Caco-2 (cell line): ENCODE measurements at regions of chr9 and their contacts with region 1.

Region 1: GRCh38 chr9:104991144-104991953 is 63.4 kb upstream of the ABCA1 start:
- DNase-seq: peak; percentile 84 to 85
- H3K4me3 ChIP-seq: peak overlapping the region; percentile 68
- H3K4me3 Mint-ChIP-seq: peak overlapping the region; percentile 96
- H3K27ac Mint-ChIP-seq: peak overlapping the region; percentile 82
- H3K4me1 ChIP-seq: peaks cover 29% of the 10 kb centered on the region
- H3K4me1 Mint-ChIP-seq: peaks cover 17% of the 10 kb centered on the region
- H3K27me3 ChIP-seq: no peaks in the 10 kb centered on the region
- H3K27me3 Mint-ChIP-seq: no peaks in the 10 kb centered on the region
- CTCF ChIP-seq: no peak

Region 2: DNA sequence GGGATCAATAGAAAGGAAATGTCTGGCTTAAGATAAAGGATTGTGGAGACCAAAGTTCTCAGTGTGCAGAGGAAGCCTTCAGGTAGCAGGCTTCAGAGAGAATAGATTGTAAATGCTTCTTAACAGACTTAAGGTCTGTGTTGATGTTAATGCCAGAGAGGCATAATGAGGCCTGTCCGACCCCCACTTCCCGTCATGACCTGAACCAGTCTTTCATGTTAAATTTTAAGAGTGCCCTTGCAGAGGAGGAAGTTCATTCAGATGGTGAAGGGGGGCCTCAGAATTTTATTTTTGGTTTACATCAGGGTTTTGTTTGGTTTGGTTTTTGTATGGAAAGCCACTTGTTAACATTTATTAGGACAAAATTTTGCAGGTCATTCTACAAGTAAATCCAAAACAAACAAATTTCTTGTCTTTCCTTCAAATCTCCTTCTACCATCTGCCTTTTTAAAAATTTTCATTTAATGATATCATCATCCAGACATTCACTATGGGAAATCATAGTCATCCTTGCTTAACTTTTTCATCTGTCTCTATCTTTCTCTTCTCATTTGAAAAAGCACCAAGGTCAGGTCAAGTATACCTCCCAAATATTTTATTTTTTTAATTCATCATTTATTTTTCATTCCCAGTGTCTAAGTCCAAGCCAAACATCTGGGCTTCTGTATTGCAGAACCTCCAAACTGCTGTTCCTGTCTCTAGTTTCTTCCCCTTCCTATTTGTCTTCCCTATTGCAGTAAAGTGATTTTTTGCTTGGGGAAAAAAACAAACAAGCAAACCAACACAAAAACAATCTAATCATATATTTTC is 56.5 kb before region 1 on chr9:
- CTCF ChIA-PET with region 1: no interaction called
- POLR2A ChIA-PET with region 1: no interaction called
- intact Hi-C with region 1: no loop called
- DNase-seq: no peak
- H3K4me3 ChIP-seq: no peak overlapping the region
- H3K4me3 Mint-ChIP-seq: no peak overlapping the region
- H3K27ac Mint-ChIP-seq: no peak overlapping the region
- H3K4me1 ChIP-seq: peaks cover 11% of the 10 kb centered on the region
- H3K4me1 Mint-ChIP-seq: peaks cover 8% of the 10 kb centered on the region
- H3K27me3 ChIP-seq: no peaks in the 10 kb centered on the region
- H3K27me3 Mint-ChIP-seq: no peaks in the 10 kb centered on the region
- CTCF ChIP-seq: no peak

Region 3: GRCh38 chr9:104968025-104968982 is 23.0 kb before region 1 on chr9:
- CTCF ChIA-PET with region 1: no interaction called
- POLR2A ChIA-PET with region 1: no interaction called
- intact Hi-C with region 1: loop called (anchors 2 kb)
- DNase-seq: peak; percentile 87 to 90
- H3K4me3 ChIP-seq: peak overlapping the region; percentile 77
- H3K4me3 Mint-ChIP-seq: peak overlapping the region; percentile 89
- H3K27ac Mint-ChIP-seq: peak overlapping the region; percentile 82
- H3K4me1 ChIP-seq: peaks cover 22% of the 10 kb centered on the region
- H3K4me1 Mint-ChIP-seq: peaks cover 37% of the 10 kb centered on the region
- H3K27me3 ChIP-seq: no peaks in the 10 kb centered on the region
- H3K27me3 Mint-ChIP-seq: no peaks in the 10 kb centered on the region
- CTCF ChIP-seq: no peak

Region 4: DNA sequence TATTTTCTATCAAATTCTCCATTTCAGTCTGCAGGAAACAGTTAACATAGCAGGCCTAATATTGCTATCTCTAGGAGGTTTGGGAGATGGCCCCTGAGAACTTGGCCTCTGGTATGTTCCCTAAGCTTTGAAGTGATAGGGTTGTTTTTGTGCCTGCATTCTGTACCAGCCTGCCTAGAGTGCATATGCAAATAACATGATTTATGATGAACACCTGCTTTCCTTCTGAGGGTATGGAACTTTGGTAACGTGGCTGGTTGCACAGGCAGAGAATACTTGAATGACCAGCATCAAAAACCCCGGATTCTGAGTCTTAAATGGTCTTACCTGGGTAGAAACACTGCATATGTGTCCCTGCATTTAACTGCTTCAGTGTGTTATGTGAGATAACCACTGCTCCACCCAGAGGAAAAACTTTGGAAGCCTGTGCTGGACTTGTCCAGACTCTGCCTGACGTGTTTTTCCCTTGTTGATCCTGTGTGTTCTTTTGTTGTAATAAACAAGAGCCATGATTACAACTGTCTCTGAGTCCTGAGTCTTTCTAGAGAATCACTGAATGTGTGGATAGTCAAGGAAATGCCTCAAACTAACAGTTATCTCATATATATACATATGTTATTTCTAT is 47.9 kb after region 1 on chr9:
- CTCF ChIA-PET with region 1: no interaction called
- POLR2A ChIA-PET with region 1: no interaction called
- intact Hi-C with region 1: loop called (anchors 1 kb)
- DNase-seq: peak in 1 of 2 experiments; percentile 30
- H3K4me3 ChIP-seq: no peak overlapping the region
- H3K4me3 Mint-ChIP-seq: no peak overlapping the region
- H3K27ac Mint-ChIP-seq: peak overlapping the region; percentile 51
- H3K4me1 ChIP-seq: peaks cover 26% of the 10 kb centered on the region
- H3K4me1 Mint-ChIP-seq: peaks cover 28% of the 10 kb centered on the region
- H3K27me3 ChIP-seq: no peaks in the 10 kb centered on the region
- H3K27me3 Mint-ChIP-seq: no peaks in the 10 kb centered on the region
- CTCF ChIP-seq: no peak

Region 5: DNA sequence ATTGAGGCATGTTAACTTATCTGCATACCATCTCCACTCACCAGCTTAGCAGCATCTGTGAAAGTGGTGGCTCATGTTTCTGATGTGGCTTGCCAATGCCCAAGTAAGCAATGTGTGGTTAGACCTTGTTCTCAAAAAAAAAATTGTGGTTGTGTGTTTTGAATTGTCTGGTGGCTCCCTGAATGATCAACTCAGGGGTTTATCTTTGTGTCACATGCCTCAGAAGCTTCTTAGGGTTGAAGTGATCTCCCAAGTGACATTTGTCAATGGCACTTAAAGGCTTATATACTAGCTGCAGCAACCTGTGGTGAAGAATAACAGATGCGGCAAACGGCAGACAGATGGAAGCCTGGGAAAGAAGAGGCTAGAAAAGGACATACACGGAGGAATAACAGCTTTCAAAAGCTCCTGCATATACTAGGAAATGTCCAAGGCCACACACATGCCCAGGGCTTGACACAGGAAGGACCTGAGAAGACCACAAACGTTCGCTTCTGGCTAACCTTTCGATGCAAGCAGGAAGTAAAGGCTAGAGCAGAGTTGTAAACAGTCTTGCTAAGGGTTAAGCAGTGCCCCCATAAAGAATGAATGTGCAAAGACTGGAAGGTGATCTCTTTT is 414.3 kb after region 1 on chr9:
- CTCF ChIA-PET with region 1: no interaction called
- POLR2A ChIA-PET with region 1: no interaction called
- intact Hi-C with region 1: no loop called
- DNase-seq: no peak
- H3K4me3 ChIP-seq: no peak overlapping the region
- H3K4me3 Mint-ChIP-seq: no peak overlapping the region
- H3K27ac Mint-ChIP-seq: no peak overlapping the region
- H3K4me1 ChIP-seq: no peaks in the 10 kb centered on the region
- H3K4me1 Mint-ChIP-seq: peaks cover 9% of the 10 kb centered on the region
- H3K27me3 ChIP-seq: no peaks in the 10 kb centered on the region
- H3K27me3 Mint-ChIP-seq: no peaks in the 10 kb centered on the region
- CTCF ChIP-seq: no peak